ENCODE measurements at regions of chr17 and their contacts with region 1.

Region 1: DNA sequence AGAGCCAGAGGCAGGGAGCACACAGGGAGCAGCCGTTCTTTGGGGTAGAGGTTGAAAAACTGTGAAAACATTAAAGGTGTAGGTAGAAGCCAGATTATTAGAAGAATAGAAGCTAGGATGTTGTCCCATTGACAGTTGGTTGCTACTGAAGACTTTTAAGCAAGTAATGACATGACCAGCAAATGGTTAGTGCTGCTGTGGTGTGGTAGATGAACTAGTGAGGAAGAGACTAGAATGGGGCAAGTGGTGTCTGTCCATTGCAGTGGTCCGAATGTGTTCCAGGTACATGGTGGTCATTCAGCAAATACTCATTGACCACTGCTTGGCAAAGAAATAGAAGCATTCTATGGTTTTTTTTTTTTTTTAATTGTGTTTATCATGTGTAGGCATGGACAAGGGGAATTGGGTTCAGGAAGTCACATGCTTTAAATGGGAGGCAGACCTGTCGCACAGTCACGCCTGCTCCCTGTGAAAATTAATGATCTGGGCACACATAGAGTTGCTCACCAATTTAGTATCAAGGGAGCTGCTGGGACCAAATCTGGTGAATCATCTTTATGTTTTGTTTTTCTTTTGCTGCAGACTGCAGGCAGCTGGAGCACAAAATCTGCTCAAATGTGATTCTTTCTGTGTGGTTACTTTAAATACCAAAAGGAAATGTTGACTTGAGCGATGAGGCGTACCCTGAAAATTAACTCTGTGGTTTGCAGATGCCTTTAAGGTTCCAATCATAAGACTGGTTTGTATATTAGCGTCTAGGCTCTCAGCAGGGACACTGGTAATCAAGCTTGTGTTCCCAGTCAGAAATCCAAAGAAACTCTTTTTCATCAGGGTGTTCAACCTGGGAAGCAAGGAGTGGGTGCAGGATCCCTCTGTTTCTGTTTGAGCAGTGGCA is 30.7 kb downstream of the YPEL2 start:
- DNase-seq: peak; percentile 65
- ATAC-seq: peak; percentile 65
- H3K4me3 Mint-ChIP-seq: peak overlapping the region; percentile 62
- H3K27ac Mint-ChIP-seq: peak overlapping the region; percentile 90
- H3K4me1 Mint-ChIP-seq: peaks cover 79% of the 10 kb centered on the region
- H3K27me3 Mint-ChIP-seq: no peaks in the 10 kb centered on the region
- CTCF ChIP-seq: no peak

Region 2: DNA sequence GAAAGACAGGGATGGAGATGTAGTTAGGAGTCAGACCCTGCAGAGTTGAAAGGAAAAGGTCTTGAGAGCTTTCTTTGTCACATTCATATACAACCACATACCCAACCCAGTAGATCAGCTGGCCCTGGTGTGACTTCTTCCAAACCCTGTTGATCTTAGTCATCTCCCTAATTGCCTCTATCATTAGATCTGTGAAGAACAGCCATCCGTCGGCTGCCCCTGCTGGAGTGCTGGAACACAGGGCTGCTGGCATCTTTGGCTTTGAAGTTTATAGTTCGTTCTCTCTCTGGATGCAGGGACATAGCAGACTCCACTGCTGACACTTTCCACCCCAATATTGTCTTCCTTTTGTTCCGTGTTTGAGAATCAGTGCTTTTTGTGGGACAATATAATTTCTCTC is 162.8 kb before region 1 on chr17:
- CTCF ChIA-PET with region 1: no interaction called
- POLR2A ChIA-PET with region 1: no interaction called
- intact Hi-C with region 1: no loop called
- DNase-seq: no peak
- ATAC-seq: no peak
- H3K4me3 Mint-ChIP-seq: no peak overlapping the region
- H3K27ac Mint-ChIP-seq: no peak overlapping the region
- H3K4me1 Mint-ChIP-seq: no peaks in the 10 kb centered on the region
- H3K27me3 Mint-ChIP-seq: no peaks in the 10 kb centered on the region
- CTCF ChIP-seq: no peak

Region 3: DNA sequence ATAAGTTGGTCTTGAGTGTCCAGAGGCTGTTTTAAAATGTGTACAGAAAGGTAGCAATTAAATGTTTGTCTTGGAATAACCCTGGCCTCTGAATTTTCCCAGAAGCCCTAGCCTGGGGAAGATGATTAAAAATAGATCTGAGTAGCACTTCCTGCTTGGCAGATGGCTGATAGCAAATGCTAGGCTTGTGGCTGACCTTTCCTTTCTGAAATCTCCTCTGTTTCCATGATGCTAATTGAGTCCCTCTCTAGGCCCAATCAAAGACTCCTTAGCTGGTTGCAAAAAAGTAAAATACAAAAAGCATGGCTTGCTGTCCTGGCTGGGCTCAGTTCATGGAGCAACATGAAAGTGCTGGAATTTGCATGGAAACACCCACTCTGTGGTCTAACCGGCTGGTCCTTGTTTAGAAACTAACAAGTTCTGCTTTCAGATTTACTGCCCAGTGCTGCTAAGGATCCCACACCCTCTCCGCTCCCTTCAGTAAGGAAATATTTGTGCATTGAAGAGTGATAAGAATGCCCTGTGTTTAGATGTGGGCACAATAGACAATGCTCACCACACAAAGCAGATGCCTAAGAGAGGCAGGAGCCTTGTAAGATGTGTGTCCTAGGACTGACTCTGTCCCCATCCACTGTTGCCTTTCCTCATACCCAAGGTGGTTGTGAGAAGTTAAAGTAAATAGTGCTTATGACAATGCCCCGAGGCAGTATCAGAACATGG is 10.1 kb after region 1 on chr17:
- CTCF ChIA-PET with region 1: interaction called, 6 read pairs
- POLR2A ChIA-PET with region 1: interaction called, 11 read pairs
- intact Hi-C with region 1: no loop called
- DNase-seq: peak; percentile 18
- ATAC-seq: peak; percentile 58
- H3K4me3 Mint-ChIP-seq: no peak overlapping the region
- H3K27ac Mint-ChIP-seq: peak overlapping the region; percentile 91
- H3K4me1 Mint-ChIP-seq: peaks cover 73% of the 10 kb centered on the region
- H3K27me3 Mint-ChIP-seq: no peaks in the 10 kb centered on the region
- CTCF ChIP-seq: no peak

Region 4: GRCh38 chr17:59427425-59427921 is 65.3 kb after region 1 on chr17:
- CTCF ChIA-PET with region 1: interaction called, 21 read pairs
- POLR2A ChIA-PET with region 1: interaction called, 3 read pairs
- intact Hi-C with region 1: no loop called
- DNase-seq: peak; percentile 84
- ATAC-seq: peak; percentile 98
- H3K4me3 Mint-ChIP-seq: no peak overlapping the region
- H3K27ac Mint-ChIP-seq: peak overlapping the region; percentile 9
- H3K4me1 Mint-ChIP-seq: peaks cover 20% of the 10 kb centered on the region
- H3K27me3 Mint-ChIP-seq: peaks cover 1% of the 10 kb centered on the region
- CTCF ChIP-seq: peak; percentile 33